ENCODE measurements at regions of chr3 and their contacts with region 1.

Region 1: GRCh38 chr3:139561959-139562676 is 22.6 kb upstream of the RBP1 start:
- DNase-seq: no peak
- H3K4me3 ChIP-seq: no peak overlapping the region
- H3K27ac ChIP-seq: no peak overlapping the region
- H3K4me1 ChIP-seq: peaks cover 0 to 3% (median 0%) of the 10 kb centered on the region in 4 experiments; a peak in 1 of 7 replicates
- H3K27me3 ChIP-seq: no peaks in the 10 kb centered on the region
- CTCF ChIP-seq: peak; percentile 65 to 96 (median 90)
- EP300 ChIP-seq: no peak
- POLR2A ChIP-seq: no peak
- RAD21 ChIP-seq: peak; percentile 98 to 99

Region 2: GRCh38 chr3:139427283-139427993 is 134.7 kb before region 1 on chr3:
- CTCF ChIA-PET with region 1: interaction called, 116 read pairs
- POLR2A ChIA-PET with region 1: interaction called, 4 read pairs
- DNase-seq: no peak
- H3K4me3 ChIP-seq: no peak overlapping the region
- H3K27ac ChIP-seq: no peak overlapping the region
- H3K4me1 ChIP-seq: 0 out of 7 replicates have a peak, but pooled peaks cover 0 to 3% (median 0%) of the 10 kb centered on the region in 4 experiments
- H3K27me3 ChIP-seq: no peaks in the 10 kb centered on the region
- CTCF ChIP-seq: peak in 2 of 3 experiments; percentile 75 to 77; a peak in 3 of 4 replicates
- EP300 ChIP-seq: no peak
- POLR2A ChIP-seq: no peak
- RAD21 ChIP-seq: peak; percentile 90 to 96

Region 3: GRCh38 chr3:139440639-139441556 is 121.2 kb before region 1 on chr3:
- CTCF ChIA-PET with region 1: interaction called, 27 read pairs
- POLR2A ChIA-PET with region 1: no interaction called
- DNase-seq: no peak
- H3K4me3 ChIP-seq: no peak overlapping the region
- H3K27ac ChIP-seq: no peak overlapping the region
- H3K4me1 ChIP-seq: no peaks in the 10 kb centered on the region
- H3K27me3 ChIP-seq: no peaks in the 10 kb centered on the region
- CTCF ChIP-seq: no peak
- EP300 ChIP-seq: no peak
- POLR2A ChIP-seq: no peak
- RAD21 ChIP-seq: no peak

Region 4: GRCh38 chr3:139506766-139507165 is 55.4 kb before region 1 on chr3:
- CTCF ChIA-PET with region 1: interaction called, 15 read pairs
- POLR2A ChIA-PET with region 1: no interaction called
- DNase-seq: no peak
- H3K4me3 ChIP-seq: no peak overlapping the region
- H3K27ac ChIP-seq: no peak overlapping the region
- H3K4me1 ChIP-seq: no peaks in the 10 kb centered on the region
- H3K27me3 ChIP-seq: no peaks in the 10 kb centered on the region
- CTCF ChIP-seq: peak; percentile 29 to 37 (median 34); a peak in 3 of 4 replicates
- EP300 ChIP-seq: no peak
- POLR2A ChIP-seq: no peak
- RAD21 ChIP-seq: peak; percentile 51 to 57

Region 5: DNA sequence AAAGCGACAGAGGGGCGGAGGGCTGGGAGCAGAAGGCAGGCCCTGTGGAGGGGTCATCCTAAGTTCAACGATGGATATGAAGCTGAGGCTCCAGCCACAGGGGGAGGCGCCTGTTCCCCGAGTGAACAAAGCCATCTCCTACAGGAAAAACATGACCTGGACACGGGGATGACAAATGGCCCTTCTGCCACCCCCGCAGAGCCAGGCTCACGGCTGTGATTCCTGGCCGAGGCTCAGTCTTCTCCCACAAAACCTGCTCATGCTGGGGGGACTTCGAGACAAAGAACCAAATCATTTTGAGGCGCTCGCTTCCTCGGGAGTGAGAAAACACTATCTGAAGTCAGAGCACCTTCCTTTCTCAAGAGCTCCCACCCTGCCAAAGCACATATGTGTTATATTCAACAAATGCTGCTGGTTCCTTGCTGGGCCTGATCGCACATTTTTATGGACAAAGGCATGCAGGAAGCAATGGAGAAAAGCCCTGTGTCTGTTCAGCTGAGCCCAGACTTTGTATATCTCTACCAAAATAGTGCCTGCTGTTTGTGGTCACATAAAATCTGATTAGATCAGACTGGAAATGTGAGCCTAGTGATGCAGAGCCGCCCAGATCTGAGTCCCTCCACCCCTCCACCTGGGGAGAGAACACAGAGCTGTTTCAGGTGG is 28.2 kb before region 1 on chr3:
- CTCF ChIA-PET with region 1: interaction called, 13 read pairs
- POLR2A ChIA-PET with region 1: interaction called, 4 read pairs
- DNase-seq: no peak
- H3K4me3 ChIP-seq: no peak overlapping the region
- H3K27ac ChIP-seq: no peak overlapping the region
- H3K4me1 ChIP-seq: peaks cover 2 to 22% (median 21%) of the 10 kb centered on the region in 4 experiments
- H3K27me3 ChIP-seq: peaks cover 0 to 15% (median 11%) of the 10 kb centered on the region in 4 experiments; a peak in 4 of 7 replicates
- CTCF ChIP-seq: no peak
- EP300 ChIP-seq: no peak
- POLR2A ChIP-seq: no peak
- RAD21 ChIP-seq: no peak

Measured in H1 (cell line).